ENCODE measurements at regions of chr6 and their contacts with region 1.

Region 1: DNA sequence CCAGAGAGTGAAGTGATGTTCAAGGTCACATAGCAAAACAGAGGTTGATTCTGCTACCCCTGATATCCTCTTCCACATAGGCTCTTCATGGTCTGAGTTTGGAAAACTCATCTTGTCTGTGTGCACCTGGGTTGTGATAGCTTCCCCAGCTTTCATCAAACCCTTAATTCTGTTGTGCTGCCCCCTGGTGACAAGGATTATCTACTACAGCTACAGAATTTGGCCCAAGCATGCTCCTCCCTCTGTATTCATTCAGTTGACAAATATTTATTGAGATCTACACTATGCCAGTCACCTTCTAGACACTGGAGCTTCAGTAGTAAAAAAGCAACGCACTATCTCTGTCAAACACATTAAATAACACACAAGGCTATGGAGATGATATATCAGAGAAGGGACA is 50.4 kb downstream of the SMPDL3A start:
- DNase-seq: peak; percentile 47 to 75 (median 62)
- H3K4me3 ChIP-seq: no peak overlapping the region
- H3K27ac ChIP-seq: no peak overlapping the region
- H3K4me1 ChIP-seq: no peaks in the 10 kb centered on the region
- H3K27me3 ChIP-seq: peaks cover 0 to 5% (median 0%) of the 10 kb centered on the region in 5 experiments

Region 2: GRCh38 chr6:121743691-121744090 is 1095.8 kb before region 1 on chr6:
- CTCF ChIA-PET with region 1: no interaction called
- POLR2A ChIA-PET with region 1: no interaction called
- DNase-seq: no peak
- H3K4me3 ChIP-seq: no peak overlapping the region
- H3K27ac ChIP-seq: no peak overlapping the region
- H3K4me1 ChIP-seq: no peaks in the 10 kb centered on the region
- H3K27me3 ChIP-seq: peaks cover 0 to 1% (median 0%) of the 10 kb centered on the region in 5 experiments

Region 3: GRCh38 chr6:122491919-122492555 is 347.4 kb before region 1 on chr6:
- CTCF ChIA-PET with region 1: interaction called, 15 read pairs
- POLR2A ChIA-PET with region 1: no interaction called
- DNase-seq: peak; percentile 71 to 86 (median 85)
- H3K4me3 ChIP-seq: peak overlapping the region in 1 of 7 experiments; percentile 20
- H3K27ac ChIP-seq: no peak overlapping the region
- H3K4me1 ChIP-seq: peaks cover 5 to 16% (median 10%) of the 10 kb centered on the region in 4 experiments
- H3K27me3 ChIP-seq: peaks cover 0 to 12% (median 0%) of the 10 kb centered on the region in 5 experiments

Region 4: DNA sequence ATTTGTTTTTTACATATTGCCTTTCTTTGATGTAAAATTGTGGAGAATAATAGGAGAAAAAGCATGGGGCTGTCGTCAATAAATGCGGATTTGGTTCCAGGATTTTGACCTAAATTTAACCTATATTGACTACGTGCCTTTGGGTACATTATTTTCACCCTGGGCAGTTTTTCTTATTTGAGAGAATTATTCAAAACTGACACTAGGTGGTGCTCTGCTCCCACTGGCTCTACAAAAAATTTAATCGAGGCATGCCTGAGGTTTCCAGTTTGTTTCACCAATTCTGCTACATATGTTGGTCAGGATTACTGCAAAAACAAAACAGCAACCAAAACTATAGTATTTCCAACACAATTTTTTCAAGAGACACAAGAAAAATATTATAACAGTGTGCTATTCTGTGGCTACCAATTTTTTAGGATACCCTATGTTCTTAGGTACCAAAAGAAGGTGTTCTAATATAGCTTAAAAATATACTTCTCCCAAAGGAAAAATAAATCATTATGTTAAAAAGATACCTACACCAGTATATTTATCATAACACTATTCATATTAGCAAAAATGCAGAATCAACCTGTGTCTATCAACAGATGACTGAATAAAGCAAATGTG is 108.6 kb before region 1 on chr6:
- CTCF ChIA-PET with region 1: interaction called, 113 read pairs
- POLR2A ChIA-PET with region 1: no interaction called
- DNase-seq: peak in 2 of 3 donors; percentile 61 to 71
- H3K4me3 ChIP-seq: no peak overlapping the region
- H3K27ac ChIP-seq: no peak overlapping the region
- H3K4me1 ChIP-seq: no peaks in the 10 kb centered on the region
- H3K27me3 ChIP-seq: peaks cover 0 to 12% (median 8%) of the 10 kb centered on the region in 5 experiments

Region 5: GRCh38 chr6:122740936-122741335 is 98.5 kb before region 1 on chr6:
- CTCF ChIA-PET with region 1: interaction called, 36 read pairs
- POLR2A ChIA-PET with region 1: no interaction called
- DNase-seq: peak in 1 of 3 donors; percentile 13
- H3K4me3 ChIP-seq: no peak overlapping the region
- H3K27ac ChIP-seq: no peak overlapping the region
- H3K4me1 ChIP-seq: no peaks in the 10 kb centered on the region
- H3K27me3 ChIP-seq: no peaks in the 10 kb centered on the region

Region 6: DNA sequence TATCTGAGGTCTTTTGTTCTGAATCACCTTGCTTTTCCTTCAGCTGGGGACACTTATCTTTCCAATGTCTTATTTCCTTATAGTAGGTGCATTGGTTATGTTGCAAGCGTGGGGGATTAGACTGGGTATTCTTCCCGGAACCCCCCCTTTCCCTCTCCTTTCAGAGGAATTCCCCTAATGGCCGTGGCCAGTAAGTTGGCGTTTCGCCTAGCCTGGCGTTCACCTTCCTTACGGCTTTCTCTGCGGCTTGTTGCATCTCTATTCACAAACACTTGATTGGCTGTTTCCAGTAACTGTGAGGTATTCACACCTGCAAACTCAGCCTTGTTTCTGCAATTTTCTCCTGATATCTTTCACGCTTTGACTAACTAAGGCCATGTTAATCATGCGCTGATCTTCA is 92.8 kb before region 1 on chr6:
- CTCF ChIA-PET with region 1: interaction called, 36 read pairs
- POLR2A ChIA-PET with region 1: no interaction called
- DNase-seq: no peak
- H3K4me3 ChIP-seq: no peak overlapping the region
- H3K27ac ChIP-seq: no peak overlapping the region
- H3K4me1 ChIP-seq: peaks cover 0 to 7% (median 3%) of the 10 kb centered on the region in 4 experiments
- H3K27me3 ChIP-seq: no peaks in the 10 kb centered on the region

Region 7: DNA sequence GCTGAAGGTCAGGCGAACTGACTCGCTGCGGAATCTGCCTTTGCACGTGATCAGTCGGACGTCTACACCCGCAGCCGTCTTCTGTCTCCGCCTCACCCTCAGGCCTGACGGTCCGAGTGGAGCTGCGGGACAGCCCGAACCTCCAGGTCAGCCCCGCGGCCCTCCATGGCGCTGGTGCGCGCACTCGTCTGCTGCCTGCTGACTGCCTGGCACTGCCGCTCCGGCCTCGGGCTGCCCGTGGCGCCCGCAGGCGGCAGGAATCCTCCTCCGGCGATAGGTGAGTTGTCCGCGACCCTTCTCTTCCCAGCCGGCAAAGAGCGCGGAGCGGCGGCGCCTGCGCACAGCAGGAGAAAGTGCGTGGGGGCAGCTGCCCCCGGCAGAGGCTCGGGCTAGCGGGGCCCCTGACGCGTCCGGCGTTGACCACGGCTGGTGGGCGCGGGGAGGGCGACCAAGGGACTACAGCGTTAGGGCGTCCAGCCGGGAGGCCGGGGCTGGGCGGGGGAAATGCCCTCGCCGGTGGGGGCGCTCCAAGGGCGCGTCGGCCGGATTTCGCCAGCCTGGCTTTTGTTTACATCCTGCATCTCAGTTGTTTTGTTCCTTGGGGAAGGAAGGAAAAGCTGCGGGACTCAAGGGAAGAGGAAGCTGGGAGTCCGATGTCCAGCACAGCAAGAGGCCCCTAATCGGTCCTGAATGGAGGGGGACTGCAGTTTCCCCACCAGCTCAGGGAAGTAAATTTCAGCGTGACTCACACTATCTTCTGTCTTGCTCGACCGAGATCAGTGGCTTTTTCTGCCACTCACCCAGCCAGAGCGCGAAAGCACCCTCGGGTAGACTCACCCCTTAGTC is 50.1 kb before region 1 on chr6 and contains the start of gene SMPDL3A:
- CTCF ChIA-PET with region 1: interaction called, 16 read pairs
- POLR2A ChIA-PET with region 1: no interaction called
- DNase-seq: peak; percentile 40 to 79 (median 67)
- H3K4me3 ChIP-seq: peak within 1 kb of the TSS; percentile 57 to 93 (median 77)
- H3K27ac ChIP-seq: no peak within 1 kb of the TSS
- H3K4me1 ChIP-seq: peaks cover 0 to 25% (median 21%) of the 10 kb centered on the region in 4 experiments
- H3K27me3 ChIP-seq: peaks cover 6 to 52% (median 22%) of the 10 kb centered on the region in 5 experiments

Measured in common myeloid progenitor, CD34-positive (primary cell).